ENCODE measurements at regions of chr13 and their contacts with region 1.

Region 1: DNA sequence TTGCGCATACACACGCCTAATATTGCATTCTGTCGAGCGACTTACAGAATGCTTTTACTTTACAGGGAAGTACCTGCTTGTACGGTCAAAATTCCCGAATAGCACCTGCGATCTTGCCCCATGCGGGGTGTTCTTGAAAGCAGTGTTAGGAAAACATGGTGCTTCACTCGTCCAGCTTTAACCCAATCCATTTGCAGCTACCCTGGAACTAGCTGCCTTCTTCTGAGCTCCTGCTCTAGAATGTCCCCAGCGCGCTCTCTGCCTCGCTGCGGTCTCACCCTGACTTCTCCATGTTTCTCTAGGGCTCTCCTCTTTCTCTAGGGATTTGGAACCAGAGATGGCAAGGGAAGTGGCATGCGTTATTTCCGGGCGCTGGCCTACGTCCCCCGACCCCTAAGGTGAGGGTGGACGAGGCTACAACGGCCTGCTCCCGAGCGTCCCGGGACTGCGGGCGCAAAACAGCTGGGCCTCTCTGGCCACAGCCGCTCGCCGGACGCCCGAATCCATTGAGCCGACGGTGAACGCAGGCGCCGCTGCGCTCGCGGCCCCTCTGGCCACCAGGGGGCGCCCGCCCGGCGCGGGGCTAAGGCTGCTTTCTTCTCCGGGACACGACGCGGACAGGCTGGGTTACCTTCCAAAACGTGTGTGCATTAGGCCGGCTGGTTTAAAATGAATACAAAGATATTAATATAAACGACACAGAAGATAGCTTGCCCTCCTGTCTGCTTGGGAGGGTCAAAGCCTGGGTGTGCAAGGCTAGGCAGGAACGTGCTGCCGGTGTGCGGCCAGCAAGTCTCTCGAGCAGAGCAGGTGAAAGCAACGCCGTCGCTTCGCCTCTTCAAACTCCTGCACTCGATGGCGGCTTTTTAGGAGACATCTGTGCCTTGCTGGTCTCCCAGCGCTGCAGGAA is 1.8 kb upstream of the SPRY2 start:
- DNase-seq: peak; percentile 85 to 95 (median 90)
- ATAC-seq: peak; percentile 24 to 59 (median 51)
- H3K4me3 ChIP-seq: peak overlapping the region; percentile 69 to 97 (median 94)
- H3K27ac ChIP-seq: peak overlapping the region; percentile 89 to 100 (median 98)
- H3K4me1 ChIP-seq: peaks cover 0 to 30% (median 14%) of the 10 kb centered on the region in 12 donors
- H3K27me3 ChIP-seq: no peaks in the 10 kb centered on the region
- CTCF ChIP-seq: peak; percentile 96 to 100 (median 99)
- POLR2A ChIP-seq: peak in 1 of 2 donors; percentile 51

Region 2: DNA sequence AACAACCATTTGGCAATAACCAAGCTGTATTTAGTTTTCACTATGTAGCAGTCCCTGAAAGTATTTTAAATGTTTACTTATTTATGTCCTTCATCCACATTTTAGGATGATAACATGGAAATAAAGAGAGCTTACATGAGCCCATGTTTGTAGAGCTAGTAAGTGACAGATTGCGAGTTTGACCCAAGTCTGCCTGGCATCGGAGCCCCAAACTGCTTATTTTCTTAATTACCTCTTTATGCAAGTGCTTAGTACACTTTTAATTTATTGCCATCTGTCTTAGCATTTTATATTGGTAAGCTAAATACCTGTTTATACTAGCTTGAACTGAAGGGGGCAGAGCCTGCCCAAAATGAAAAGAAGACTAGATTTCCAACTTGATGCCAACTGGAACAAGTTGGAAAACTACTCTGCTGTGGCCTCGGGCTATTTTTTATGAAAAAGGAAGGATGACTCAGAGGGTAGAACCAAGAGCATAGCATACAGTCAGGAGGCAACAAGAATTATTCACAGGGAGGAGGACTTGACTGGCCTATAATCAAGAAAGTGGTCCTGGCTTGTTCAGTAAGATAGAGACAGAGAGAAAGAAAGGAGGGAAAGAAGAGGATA is 711.6 kb before region 1 on chr13:
- intact Hi-C with region 1: loop called in 2 of 10 experiments (anchors 2 to 5 kb)
- DNase-seq: peak in 1 of 5 donors; percentile 10
- ATAC-seq: peak in 3 of 4 donors; percentile 82 to 91 (median 90)
- H3K4me3 ChIP-seq: no peak overlapping the region
- H3K27ac ChIP-seq: peak overlapping the region in 2 of 12 donors; percentile 5 to 12
- H3K4me1 ChIP-seq: peaks cover 0 to 11% (median 0%) of the 10 kb centered on the region in 12 donors
- H3K27me3 ChIP-seq: no peaks in the 10 kb centered on the region
- CTCF ChIP-seq: peak in 10 of 12 donors; percentile 24 to 54 (median 38)
- POLR2A ChIP-seq: no peak

Region 3: DNA sequence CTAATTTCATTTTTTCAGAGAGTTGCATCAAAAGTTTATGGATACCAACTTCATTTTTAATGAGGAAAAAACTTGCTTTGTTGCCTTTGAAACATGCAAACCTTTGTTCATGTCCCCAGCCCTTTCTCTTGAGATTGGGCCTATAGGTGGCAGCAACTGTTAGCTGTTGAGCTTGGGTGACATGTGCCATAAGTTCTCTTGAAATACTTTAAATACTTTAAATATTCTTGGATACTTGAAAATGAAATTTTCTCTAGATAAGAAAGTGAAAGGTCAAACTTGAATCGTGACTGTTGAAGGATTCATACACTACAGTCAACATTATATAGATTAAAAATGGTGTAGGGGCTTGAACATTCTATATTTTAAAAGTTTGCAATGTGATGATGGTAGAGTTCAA is 566.9 kb before region 1 on chr13:
- intact Hi-C with region 1: loop called in 8 of 10 experiments (anchors 2 to 10 kb)
- DNase-seq: peak in 2 of 5 donors; percentile 17 to 37
- ATAC-seq: peak in 3 of 4 donors; percentile 61 to 70 (median 69)
- H3K4me3 ChIP-seq: no peak overlapping the region
- H3K27ac ChIP-seq: no peak overlapping the region
- H3K4me1 ChIP-seq: peaks cover 0 to 24% (median 4%) of the 10 kb centered on the region in 12 donors
- H3K27me3 ChIP-seq: no peaks in the 10 kb centered on the region
- CTCF ChIP-seq: peak in 11 of 12 donors; percentile 44 to 75 (median 60)
- POLR2A ChIP-seq: no peak

Region 4: DNA sequence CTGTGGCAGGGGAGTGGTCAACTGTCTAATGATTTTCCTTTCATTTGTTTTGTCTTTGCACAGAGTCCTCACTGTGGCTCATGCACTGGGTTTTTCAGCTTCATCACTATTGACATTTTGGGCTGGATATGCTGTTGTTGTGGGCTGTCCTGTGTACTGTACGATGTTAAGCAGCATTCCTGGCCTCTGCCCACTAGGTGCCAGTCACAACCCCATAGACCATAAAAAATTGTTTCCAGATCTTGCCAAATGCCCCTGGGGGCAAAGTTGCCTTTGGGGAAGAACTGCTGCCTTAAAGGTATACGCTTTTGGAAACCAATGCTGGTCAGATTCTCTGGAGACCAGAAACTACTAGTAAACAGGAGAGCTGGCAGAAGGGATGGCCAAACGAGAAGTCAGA is 312.2 kb before region 1 on chr13:
- intact Hi-C with region 1: loop called in 6 of 10 experiments (anchors 5 to 10 kb)
- DNase-seq: peak in 3 of 5 donors; percentile 15 to 34 (median 20)
- ATAC-seq: peak; percentile 55 to 87 (median 79)
- H3K4me3 ChIP-seq: no peak overlapping the region
- H3K27ac ChIP-seq: no peak overlapping the region
- H3K4me1 ChIP-seq: peaks cover 0 to 6% (median 0%) of the 10 kb centered on the region in 12 donors
- H3K27me3 ChIP-seq: no peaks in the 10 kb centered on the region
- CTCF ChIP-seq: peak in 10 of 12 donors; percentile 6 to 52 (median 35)
- POLR2A ChIP-seq: no peak

Region 5: GRCh38 chr13:80141123-80141849 is 201.4 kb before region 1 on chr13:
- intact Hi-C with region 1: loop called in 1 of 10 experiments (anchors 2 kb)
- DNase-seq: peak in 4 of 5 donors; percentile 71 to 79 (median 76)
- ATAC-seq: peak; percentile 95 to 97 (median 96)
- H3K4me3 ChIP-seq: peak overlapping the region in 6 of 12 donors; percentile 1 to 18 (median 10)
- H3K27ac ChIP-seq: peak overlapping the region in 11 of 12 donors; percentile 14 to 79 (median 67)
- H3K4me1 ChIP-seq: peaks cover 0 to 54% (median 25%) of the 10 kb centered on the region in 12 donors
- H3K27me3 ChIP-seq: no peaks in the 10 kb centered on the region
- CTCF ChIP-seq: no peak
- POLR2A ChIP-seq: no peak

Region 6: GRCh38 chr13:80469853-80470381 is 127.2 kb after region 1 on chr13:
- intact Hi-C with region 1: loop called in 1 of 10 experiments (anchors 10 kb)
- DNase-seq: peak; percentile 73 to 89 (median 76)
- ATAC-seq: peak; percentile 98 to 100 (median 98)
- H3K4me3 ChIP-seq: peak overlapping the region in 1 of 12 donors; percentile 4
- H3K27ac ChIP-seq: peak overlapping the region; percentile 79 to 96 (median 86)
- H3K4me1 ChIP-seq: peaks cover 8 to 36% (median 24%) of the 10 kb centered on the region in 12 donors
- H3K27me3 ChIP-seq: no peaks in the 10 kb centered on the region
- CTCF ChIP-seq: no peak
- POLR2A ChIP-seq: no peak